ENCODE measurements at regions of chr16 and their contacts with region 1.

Region 1: GRCh38 chr16:3023669-3024478 is at the starts of genes HCFC1R1 and THOC6:
- DNase-seq: peak; percentile 88
- H3K4me3 ChIP-seq: peak within 1 kb of the TSS; percentile 59
- H3K27me3 ChIP-seq: peaks cover under 1% of the 10 kb centered on the region; the same call in 1 of the 2 replicates
- CTCF ChIP-seq: no peak
- polyA plus RNA-seq, gene HCFC1R1: 26.2 and 33.7 TPM in 2 replicates
- polyA plus RNA-seq, gene THOC6: 11.0 and 20.5 TPM in 2 replicates

Region 2: GRCh38 chr16:2035431-2036220 is 988.2 kb before region 1 on chr16:
- CTCF ChIA-PET with region 1: no interaction called
- POLR2A ChIA-PET with region 1: interaction called, 21 read pairs
- DNase-seq: no peak
- H3K4me3 ChIP-seq: peak overlapping the region; percentile 20
- H3K27me3 ChIP-seq: no peaks in the 10 kb centered on the region
- CTCF ChIP-seq: no peak

Region 3: DNA sequence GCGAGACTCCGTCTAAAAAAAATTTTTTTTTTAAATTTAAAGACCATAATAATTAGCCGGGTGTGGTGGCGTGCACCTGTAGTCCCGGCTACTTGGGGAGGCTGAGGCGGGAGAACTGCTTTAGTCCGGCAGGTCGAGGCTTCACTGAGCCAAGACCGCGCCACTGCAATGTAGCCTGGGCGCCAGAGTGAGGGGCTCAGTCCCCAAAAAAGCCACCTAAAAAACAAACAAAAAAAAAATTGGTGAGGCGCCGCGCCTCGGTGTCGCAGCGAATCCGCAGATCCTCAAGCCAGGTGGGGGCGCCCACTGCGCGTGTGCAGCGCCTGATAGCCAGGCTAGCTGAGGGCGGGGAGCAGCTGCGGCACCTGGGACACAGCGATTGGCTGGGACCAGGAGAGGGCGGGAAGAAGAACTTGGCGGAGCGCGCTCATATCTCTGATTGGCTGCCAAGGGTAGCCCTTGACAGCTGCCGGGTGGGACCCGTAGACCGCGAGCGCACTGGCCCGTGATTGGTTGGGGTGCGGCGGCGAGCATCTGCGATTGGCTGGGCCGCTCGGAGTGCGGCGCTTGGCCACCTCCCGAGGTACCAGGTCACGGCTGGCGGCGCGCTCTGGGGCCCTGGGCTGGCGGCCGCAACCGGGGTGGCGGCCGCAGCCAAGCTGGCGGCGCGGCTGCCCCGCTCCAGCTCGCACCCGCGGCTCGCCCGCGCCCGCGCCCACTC is 20.1 kb before region 1 on chr16:
- CTCF ChIA-PET with region 1: interaction called, 66 read pairs
- POLR2A ChIA-PET with region 1: interaction called, 3 read pairs
- DNase-seq: peak; percentile 91
- H3K4me3 ChIP-seq: peak overlapping the region; percentile 5; the same call in 1 of the 2 replicates
- H3K27me3 ChIP-seq: no peaks in the 10 kb centered on the region; the same call in 1 of the 2 replicates
- CTCF ChIP-seq: peak; percentile 50

Region 4: DNA sequence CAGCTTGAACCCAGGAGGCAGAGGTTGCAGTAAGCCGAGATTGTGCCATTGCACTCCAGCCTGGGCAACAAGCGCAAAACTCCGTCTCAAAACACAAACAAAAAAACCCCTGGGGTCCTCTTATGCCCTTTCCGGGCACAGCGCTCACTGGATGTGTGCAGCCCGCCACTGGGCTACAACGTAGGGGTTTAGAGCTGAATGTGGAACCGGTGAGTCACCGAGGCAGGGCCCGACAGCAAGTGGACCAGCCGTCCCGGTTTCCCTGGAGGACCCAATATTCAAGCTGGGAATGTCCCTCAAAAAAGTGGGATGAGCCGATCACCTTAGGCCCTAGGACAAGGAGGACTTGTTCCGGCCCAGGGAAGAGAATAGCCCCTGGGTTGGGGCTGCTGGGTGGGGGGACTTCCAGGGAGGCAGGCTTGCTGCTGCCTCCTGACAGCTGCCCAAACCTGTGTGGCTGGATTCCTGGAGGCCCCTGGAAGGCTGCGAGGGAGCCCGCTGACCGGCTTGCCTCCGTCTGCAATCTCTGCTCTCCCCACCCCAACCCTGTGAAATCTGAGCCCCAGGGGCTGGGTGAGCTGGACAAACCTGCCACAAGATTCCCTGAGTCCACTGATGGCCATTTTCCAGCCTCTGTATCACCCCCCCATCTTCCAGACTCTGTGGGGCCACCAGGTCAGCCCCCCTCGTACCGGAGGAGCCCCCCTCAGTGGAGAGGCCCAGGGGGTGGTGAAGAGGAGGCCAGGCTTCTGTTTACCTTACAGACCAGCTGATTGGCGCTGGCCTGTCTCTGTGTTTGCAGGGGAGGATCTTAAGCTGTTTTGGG is 14.1 kb before region 1 on chr16:
- CTCF ChIA-PET with region 1: interaction called, 66 read pairs
- POLR2A ChIA-PET with region 1: interaction called, 3 read pairs
- DNase-seq: no peak
- H3K4me3 ChIP-seq: no peak overlapping the region
- H3K27me3 ChIP-seq: peaks cover 5% of the 10 kb centered on the region
- CTCF ChIP-seq: no peak

Region 5: GRCh38 chr16:3045357-3045728 is 21.5 kb after region 1 on chr16:
- CTCF ChIA-PET with region 1: interaction called, 97 read pairs
- POLR2A ChIA-PET with region 1: interaction called, 3 read pairs
- DNase-seq: no peak
- H3K4me3 ChIP-seq: peak overlapping the region; percentile 38
- H3K27me3 ChIP-seq: peaks cover 34% of the 10 kb centered on the region
- CTCF ChIP-seq: no peak

Measured in BJ (cell line).